ENCODE measurements at regions of chr11 and their contacts with region 1.

Region 1: DNA sequence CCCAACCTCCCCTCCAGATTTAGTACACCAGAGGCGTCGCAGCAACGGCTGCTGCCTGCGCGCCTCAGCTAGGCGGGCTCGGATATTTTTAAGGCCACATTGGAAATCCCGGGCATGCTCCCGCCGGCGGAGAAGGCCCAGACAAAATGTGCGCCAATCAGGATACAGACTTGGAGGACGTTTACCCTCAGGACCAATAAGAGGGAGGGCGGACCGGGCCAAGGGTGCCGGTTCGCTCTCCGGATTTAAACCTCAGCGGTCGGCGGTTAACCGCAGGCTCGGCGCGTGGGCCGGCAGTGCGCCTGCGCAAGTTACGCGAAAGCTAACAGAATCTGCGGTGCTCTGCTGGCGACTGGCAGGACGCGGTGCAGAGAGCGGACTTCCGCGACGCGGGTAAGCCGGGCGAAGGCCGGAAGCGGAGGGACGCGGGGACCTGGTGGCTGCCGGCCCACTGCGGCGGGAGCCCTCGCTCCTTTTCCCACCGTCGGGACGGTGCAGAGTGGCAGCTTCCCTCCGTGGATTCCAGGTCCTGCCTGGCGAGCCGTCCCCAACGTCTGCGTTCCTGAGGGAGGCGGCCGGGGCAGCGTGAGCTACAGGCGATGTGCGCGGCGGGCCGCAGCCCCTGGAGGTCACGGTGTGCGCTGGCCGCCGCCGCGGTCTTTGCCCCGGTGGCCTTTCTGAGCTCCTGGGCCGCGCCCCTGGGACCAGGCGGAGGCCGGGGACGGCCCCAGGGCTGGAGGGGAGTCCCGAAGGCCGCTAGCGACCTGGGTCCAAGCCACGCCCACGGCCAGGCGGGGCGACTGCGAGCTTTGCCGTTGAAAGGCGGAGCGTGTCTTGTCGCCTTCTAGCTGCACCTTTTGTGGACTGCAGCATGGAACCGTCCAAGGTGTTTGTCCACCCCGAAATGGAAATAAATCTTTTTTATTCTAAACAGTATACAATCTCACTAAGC is at the start of gene HYLS1:
- DNase-seq: peak; percentile 90 to 100 (median 94)
- ATAC-seq: peak; percentile 95
- H3K4me3 ChIP-seq: peak within 1 kb of the TSS; percentile 86
- H3K4me3 Mint-ChIP-seq: peak within 1 kb of the TSS; percentile 87 to 98 (median 96)
- H3K27ac ChIP-seq: peak within 1 kb of the TSS; percentile 71
- H3K27ac Mint-ChIP-seq: peak within 1 kb of the TSS; percentile 88 to 99 (median 97)
- H3K4me1 ChIP-seq: peaks cover 6% of the 10 kb centered on the region in 2 donors
- H3K4me1 Mint-ChIP-seq: peaks cover 20 to 57% (median 39%) of the 10 kb centered on the region in 7 donors
- H3K27me3 ChIP-seq: no peaks in the 10 kb centered on the region
- H3K27me3 Mint-ChIP-seq: peaks cover 0 to 4% (median 0%) of the 10 kb centered on the region in 5 donors
- total RNA-seq, gene HYLS1: 2.7 to 13.1 (median 8.0) TPM

Region 2: GRCh38 chr11:124875943-124876817 is 1011.5 kb before region 1 on chr11:
- CTCF ChIA-PET with region 1: no interaction called
- POLR2A ChIA-PET with region 1: no interaction called
- intact Hi-C with region 1: loop called in 1 of 2 experiments (anchors 5 kb)
- DNase-seq: peak; percentile 71 to 84 (median 81)
- ATAC-seq: peak; percentile 94
- H3K4me3 ChIP-seq: peak overlapping the region; percentile 98
- H3K4me3 Mint-ChIP-seq: peak overlapping the region; percentile 85 to 94 (median 90)
- H3K27ac ChIP-seq: peak overlapping the region; percentile 79
- H3K27ac Mint-ChIP-seq: peak overlapping the region; percentile 77 to 95 (median 92)
- H3K4me1 ChIP-seq: peaks cover 7 to 9% of the 10 kb centered on the region in 2 donors
- H3K4me1 Mint-ChIP-seq: peaks cover 11 to 34% (median 24%) of the 10 kb centered on the region in 7 donors
- H3K27me3 ChIP-seq: peaks cover 0 to 3% of the 10 kb centered on the region in 2 donors
- H3K27me3 Mint-ChIP-seq: peaks cover 18 to 49% (median 34%) of the 10 kb centered on the region in 5 donors

Region 3: DNA sequence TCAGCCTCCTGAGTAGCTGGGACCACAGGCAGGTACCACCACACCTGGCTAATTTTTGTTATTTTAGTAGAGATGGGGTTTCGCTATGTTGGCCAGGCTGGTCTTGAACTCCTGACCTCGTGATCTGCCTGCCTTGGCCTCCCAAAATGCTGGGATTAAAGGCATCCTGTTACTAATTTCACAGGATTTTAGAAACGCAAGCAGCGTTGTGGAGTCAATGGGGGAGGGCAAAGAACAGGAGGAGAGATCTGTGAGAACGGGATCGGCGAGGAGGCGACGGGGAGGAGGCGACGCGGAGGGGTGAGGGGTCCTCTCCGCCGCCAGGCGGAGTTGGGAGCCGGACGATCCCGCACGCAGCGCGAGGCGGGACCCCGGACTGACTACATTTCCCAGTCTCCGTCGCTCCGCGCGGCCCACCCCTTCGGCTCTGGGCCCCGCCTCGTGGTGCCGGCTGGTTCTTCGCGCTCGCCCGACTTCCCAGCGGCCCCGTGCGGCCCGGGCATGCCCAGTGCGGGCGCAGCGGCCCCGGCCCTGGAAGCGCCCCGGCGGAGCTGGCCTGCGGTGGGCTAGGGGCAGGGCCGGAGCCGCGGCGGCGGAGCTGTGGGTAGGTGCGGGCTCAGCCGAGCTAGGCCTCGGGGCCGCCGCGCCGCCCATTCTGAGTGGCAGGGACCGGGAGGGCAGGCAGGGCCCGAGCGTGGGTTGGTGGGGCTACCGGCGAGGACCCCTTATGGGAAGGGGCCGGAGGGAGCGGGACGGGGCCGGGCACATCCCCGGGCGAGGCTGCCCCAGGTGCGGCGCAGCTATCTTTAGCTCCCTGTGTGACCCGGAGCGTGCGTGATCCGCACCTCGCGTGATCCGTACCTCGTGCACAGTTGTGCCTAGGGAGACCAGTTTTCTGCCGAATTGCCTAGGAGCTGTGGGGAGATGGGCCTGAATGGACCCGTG is 318.4 kb before region 1 on chr11 and contains the start of gene EI24:
- CTCF ChIA-PET with region 1: no interaction called
- POLR2A ChIA-PET with region 1: interaction called, 7 read pairs
- intact Hi-C with region 1: loop called (anchors 1 kb)
- DNase-seq: peak; percentile 73 to 89 (median 81)
- ATAC-seq: peak; percentile 99
- H3K4me3 ChIP-seq: peak within 1 kb of the TSS; percentile 90
- H3K4me3 Mint-ChIP-seq: peak within 1 kb of the TSS; percentile 90 to 97 (median 94)
- H3K27ac ChIP-seq: peak within 1 kb of the TSS; percentile 90
- H3K27ac Mint-ChIP-seq: peak within 1 kb of the TSS; percentile 78 to 96 (median 91)
- H3K4me1 ChIP-seq: peaks cover 13 to 16% of the 10 kb centered on the region in 2 donors
- H3K4me1 Mint-ChIP-seq: peaks cover 12 to 38% (median 26%) of the 10 kb centered on the region in 7 donors
- H3K27me3 ChIP-seq: no peaks in the 10 kb centered on the region
- H3K27me3 Mint-ChIP-seq: no peaks in the 10 kb centered on the region
- total RNA-seq, gene EI24: 21.3 to 42.7 (median 35.7) TPM

Region 4: DNA sequence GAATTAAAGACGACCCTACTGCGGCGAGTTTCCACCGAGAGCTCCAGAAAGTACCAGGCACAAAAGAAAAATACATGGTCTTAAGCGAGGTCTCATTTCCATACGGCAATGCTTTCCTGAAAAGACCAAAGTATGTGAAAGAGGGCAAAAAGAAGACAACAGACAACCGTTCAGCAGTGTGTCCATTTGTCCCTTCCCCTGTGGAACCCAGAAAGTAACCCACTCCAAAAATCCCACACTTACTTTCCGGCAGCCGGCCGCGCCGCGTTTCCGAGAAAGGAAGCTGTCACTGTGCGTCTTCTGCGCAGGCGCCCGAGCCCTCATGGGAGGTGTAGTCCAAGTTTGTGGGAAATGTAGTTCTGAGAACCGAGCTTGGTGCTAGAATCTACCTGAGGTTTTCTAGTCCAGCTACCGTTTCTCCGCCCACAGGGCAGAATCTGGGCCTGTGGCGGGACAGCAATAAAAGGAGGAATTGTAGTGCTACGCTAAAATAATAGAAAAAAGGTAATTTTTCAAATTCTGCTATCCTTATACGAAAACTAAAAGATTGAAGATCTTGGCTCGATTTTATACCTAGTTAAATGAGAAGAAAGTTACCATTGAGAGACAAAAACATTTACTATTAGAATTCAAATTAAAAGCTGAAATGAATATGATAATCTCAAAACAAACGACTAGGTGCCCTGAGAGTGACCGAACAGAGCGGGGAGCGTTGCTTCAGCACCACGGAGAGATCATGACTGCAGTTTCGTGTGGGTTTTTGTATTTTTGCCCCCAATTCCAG is 15.5 kb after region 1 on chr11 and contains the start of gene PUS3:
- CTCF ChIA-PET with region 1: interaction called, 6 read pairs
- POLR2A ChIA-PET with region 1: interaction called, 21 read pairs
- intact Hi-C with region 1: loop called (anchors 1 kb)
- DNase-seq: peak; percentile 73 to 88 (median 83)
- ATAC-seq: peak; percentile 96
- H3K4me3 ChIP-seq: peak within 1 kb of the TSS; percentile 91
- H3K4me3 Mint-ChIP-seq: peak within 1 kb of the TSS; percentile 82 to 98 (median 96)
- H3K27ac ChIP-seq: peak within 1 kb of the TSS; percentile 86
- H3K27ac Mint-ChIP-seq: peak within 1 kb of the TSS; percentile 83 to 96 (median 92)
- H3K4me1 ChIP-seq: peaks cover 7 to 13% of the 10 kb centered on the region in 2 donors
- H3K4me1 Mint-ChIP-seq: peaks cover 21 to 54% (median 39%) of the 10 kb centered on the region in 7 donors
- H3K27me3 ChIP-seq: peaks cover 0 to 4% of the 10 kb centered on the region in 2 donors
- H3K27me3 Mint-ChIP-seq: peaks cover 18 to 40% (median 29%) of the 10 kb centered on the region in 5 donors
- total RNA-seq, gene PUS3: 4.6 to 15.3 (median 9.3) TPM

Region 5: DNA sequence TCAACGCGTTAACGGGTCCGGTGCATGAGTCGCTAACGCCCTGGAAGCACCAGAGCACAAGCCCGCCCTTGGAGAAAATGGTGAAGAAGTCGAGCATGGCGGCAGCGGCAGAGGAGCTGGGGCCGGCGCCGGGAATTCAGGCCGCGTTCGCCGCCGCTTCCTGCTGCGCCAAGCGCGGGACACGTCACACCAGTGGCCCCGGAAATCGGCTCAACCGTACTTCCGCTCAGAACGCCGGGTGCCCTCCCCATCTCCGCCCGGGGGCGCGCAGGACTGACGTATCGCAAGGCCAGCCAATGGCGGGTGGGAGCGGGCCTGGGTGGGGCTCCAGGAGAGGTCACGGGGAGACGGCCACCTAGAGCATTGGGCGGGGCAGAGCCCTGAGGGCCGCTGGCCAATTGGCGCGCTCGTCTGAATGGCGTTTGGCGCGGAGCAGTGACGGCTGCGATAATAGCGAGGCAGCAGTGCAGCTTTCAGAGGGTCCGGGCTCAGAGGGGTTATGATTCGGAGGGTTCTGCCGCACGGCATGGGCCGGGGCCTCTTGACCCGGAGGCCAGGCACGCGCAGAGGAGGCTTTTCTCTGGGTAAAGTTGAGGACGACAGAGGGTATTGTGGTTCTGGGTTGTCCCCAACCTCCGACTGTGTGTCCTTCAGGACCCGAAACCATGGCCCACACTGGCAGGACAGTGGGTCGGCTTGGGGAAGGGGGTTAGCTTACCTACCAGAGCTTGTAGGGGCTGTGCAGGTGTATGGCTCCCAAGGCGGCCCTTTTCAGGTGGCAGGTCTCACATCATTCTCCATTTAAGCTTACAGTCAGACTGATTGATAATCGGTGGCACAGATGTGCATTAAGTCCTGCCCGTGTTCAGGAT is 381.3 kb after region 1 on chr11 and contains the starts of genes FOXRED1 and SRPRA:
- CTCF ChIA-PET with region 1: no interaction called
- POLR2A ChIA-PET with region 1: interaction called, 5 read pairs
- intact Hi-C with region 1: loop called (anchors 1 kb)
- DNase-seq: peak; percentile 98 to 100 (median 100)
- ATAC-seq: peak; percentile 100
- H3K4me3 ChIP-seq: peak within 1 kb of the TSS; percentile 99
- H3K4me3 Mint-ChIP-seq: peak within 1 kb of the TSS; percentile 91 to 98 (median 97)
- H3K27ac ChIP-seq: peak within 1 kb of the TSS; percentile 94
- H3K27ac Mint-ChIP-seq: peak within 1 kb of the TSS; percentile 94 to 99 (median 98)
- H3K4me1 ChIP-seq: peaks cover 22 to 23% of the 10 kb centered on the region in 2 donors
- H3K4me1 Mint-ChIP-seq: peaks cover 26 to 60% (median 47%) of the 10 kb centered on the region in 7 donors
- H3K27me3 ChIP-seq: no peaks in the 10 kb centered on the region
- H3K27me3 Mint-ChIP-seq: no peaks in the 10 kb centered on the region
- total RNA-seq, gene FOXRED1: 27.5 to 42.7 (median 35.5) TPM
- total RNA-seq, gene SRPRA: 141 to 179 (median 150) TPM